GM12878 (cell line): ENCODE measurements at regions of chr3 and their contacts with region 1.

Region 1: DNA sequence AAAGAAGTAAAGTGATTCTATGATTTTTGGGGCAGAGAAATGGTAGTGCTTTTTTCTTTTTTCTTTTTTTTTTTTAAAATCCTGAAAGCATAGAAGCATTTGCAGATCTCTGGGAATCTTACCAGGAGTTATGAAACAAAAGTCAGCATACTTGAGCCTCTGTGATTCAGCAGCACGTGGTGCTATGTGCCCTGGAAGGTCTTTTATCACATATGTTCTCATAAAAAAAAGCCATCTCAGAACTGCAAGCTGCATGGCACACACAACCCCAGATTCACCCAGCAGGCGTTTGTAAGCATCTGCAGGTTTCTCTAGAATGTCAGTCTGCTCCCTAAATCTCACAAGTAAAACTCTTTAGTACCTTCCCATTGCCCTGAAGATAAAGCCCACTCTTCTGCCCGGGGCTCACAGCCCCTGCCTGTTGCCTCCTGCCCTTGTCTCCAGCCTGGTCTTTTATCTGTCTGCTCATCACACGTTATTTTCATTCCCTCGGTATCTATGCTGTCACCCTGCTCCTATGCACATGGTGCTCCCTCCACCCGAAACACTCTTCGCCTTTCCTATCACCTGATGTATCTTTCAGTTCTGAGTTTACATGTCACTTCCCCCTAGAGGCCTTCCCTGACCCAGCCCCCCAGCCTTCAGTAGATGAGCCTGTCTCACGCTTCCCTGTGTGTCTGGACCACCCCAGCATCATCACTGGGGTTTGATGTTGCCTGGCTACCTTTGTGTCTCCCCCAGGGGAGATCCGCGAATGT is 72.4 kb downstream of the CHDH start:
- DNase-seq: peak; percentile 82
- ATAC-seq: peak; percentile 93
- H3K4me3 ChIP-seq: no peak overlapping the region
- H3K27ac ChIP-seq: peak overlapping the region; percentile 65
- H3K4me1 ChIP-seq: peaks cover 27% of the 10 kb centered on the region
- H3K27me3 ChIP-seq: no peaks in the 10 kb centered on the region
- CTCF ChIP-seq: 0 out of 6 replicates have a peak, but pooled peaks of 1 of the 3 experiments have one; percentile 7
- EP300 ChIP-seq: peak; percentile 58 to 66; a peak in 3 of 4 replicates
- POLR2A ChIP-seq: peak; percentile 46; the same call in 1 of the 2 replicates
- RAD21 ChIP-seq: no peak

Region 2: DNA sequence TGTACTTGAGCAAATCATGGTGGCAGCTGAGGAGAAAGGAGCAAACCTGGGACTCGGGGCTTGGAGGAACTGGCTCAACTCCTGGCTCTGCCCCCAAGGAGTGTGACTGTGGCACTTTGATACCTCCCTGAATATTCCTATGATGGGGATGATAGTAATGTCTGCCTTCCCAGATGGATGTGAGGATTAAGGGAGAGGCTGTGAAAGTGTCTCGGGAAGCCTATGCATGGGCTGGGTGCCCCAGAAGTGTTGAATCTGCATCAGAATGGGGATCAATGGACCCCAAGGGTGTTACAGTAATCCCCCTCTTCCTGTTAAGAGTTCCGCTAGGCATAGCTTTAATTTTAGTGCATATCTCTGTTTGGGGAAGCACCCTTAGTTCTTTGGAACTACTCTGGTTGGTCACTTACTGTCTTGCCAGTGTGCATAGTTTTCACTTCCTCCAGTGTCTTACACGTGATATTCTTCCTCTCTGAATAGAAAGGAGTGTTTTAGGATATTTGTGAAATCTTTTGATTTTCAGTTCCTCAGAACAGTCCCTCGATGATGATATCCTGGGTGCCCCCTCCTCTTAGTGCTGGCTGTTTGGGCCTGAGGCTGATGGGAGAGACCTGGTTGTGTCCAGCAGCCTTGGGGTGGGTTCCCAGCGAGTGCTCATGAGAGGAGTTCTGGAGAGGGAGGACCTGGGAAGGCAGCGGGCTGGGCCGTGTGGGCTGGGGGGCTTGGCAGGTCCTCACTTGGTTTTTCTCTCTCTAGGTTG is 25.1 kb before region 1 on chr3:
- CTCF ChIA-PET with region 1: interaction called, 3 read pairs
- POLR2A ChIA-PET with region 1: interaction called, 7 read pairs
- RAD21 ChIA-PET with region 1: interaction called, 16 read pairs
- SMC1A ChIA-PET with region 1: interaction called, 40 read pairs
- in situ Hi-C with region 1: no loop called
- intact Hi-C with region 1: no loop called
- DNase-seq: peak; percentile 79
- ATAC-seq: peak; percentile 86
- H3K4me3 ChIP-seq: peak overlapping the region; percentile 44; the same call in 1 of the 2 replicates
- H3K27ac ChIP-seq: peak overlapping the region; percentile 92
- H3K4me1 ChIP-seq: peaks cover 55% of the 10 kb centered on the region
- H3K27me3 ChIP-seq: no peaks in the 10 kb centered on the region
- CTCF ChIP-seq: no peak
- EP300 ChIP-seq: peak; percentile 51 to 54; a peak in 2 of 4 replicates
- POLR2A ChIP-seq: no peak
- RAD21 ChIP-seq: no peak

Region 3: GRCh38 chr3:53891497-53892285 is 117.9 kb after region 1 on chr3 and contains the start of gene SELENOK:
- CTCF ChIA-PET with region 1: no interaction called
- POLR2A ChIA-PET with region 1: no interaction called
- RAD21 ChIA-PET with region 1: no interaction called
- SMC1A ChIA-PET with region 1: interaction called, 10 read pairs
- in situ Hi-C with region 1: no loop called
- intact Hi-C with region 1: no loop called
- DNase-seq: peak; percentile 96
- ATAC-seq: peak; percentile 96
- H3K4me3 ChIP-seq: peak within 1 kb of the TSS; percentile 89
- H3K27ac ChIP-seq: peak within 1 kb of the TSS; percentile 95
- H3K4me1 ChIP-seq: peaks cover 22% of the 10 kb centered on the region
- H3K27me3 ChIP-seq: no peaks in the 10 kb centered on the region
- CTCF ChIP-seq: no peak
- EP300 ChIP-seq: no peak; a peak in 1 of 4 replicates
- POLR2A ChIP-seq: peak; percentile 94
- RAD21 ChIP-seq: no peak
- polyA plus RNA-seq, gene SELENOK: 245 to 322 TPM

Region 4: DNA sequence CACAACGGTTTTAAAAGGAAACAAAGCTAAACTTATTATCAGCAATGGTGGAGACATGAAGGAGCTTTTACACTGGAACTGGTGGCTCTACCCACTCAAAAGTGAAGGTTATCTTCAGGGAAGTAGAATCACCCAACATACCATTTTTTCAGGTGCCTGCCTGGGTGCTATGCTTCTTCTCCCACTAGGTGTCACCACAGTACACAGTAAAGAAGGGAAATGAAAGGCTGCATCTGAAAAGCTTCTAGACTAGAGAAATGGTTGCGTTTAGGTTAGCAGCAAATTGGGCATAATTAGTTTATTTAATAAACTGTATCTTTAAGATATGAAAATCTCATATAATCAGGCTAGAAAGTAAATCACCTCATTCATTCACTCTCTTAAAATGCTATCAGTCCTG is 164.9 kb after region 1 on chr3:
- CTCF ChIA-PET with region 1: no interaction called
- POLR2A ChIA-PET with region 1: no interaction called
- RAD21 ChIA-PET with region 1: no interaction called
- SMC1A ChIA-PET with region 1: no interaction called
- in situ Hi-C with region 1: no loop called
- intact Hi-C with region 1: no loop called
- DNase-seq: no peak
- ATAC-seq: peak; percentile 87
- H3K4me3 ChIP-seq: no peak overlapping the region
- H3K27ac ChIP-seq: no peak overlapping the region
- H3K4me1 ChIP-seq: no peaks in the 10 kb centered on the region
- H3K27me3 ChIP-seq: no peaks in the 10 kb centered on the region; a peak in 1 of 4 replicates
- CTCF ChIP-seq: peak; percentile 74 to 81 (median 78)
- EP300 ChIP-seq: no peak
- POLR2A ChIP-seq: no peak
- RAD21 ChIP-seq: peak; percentile 82